Mucosa of descending colon (tissue), 3 donors: ENCODE measurements at regions of chr5 and their contacts with region 1.

Region 1: GRCh38 chr5:134527146-134527960 is 1.9 kb downstream of the JADE2 start:
- DNase-seq: peak; percentile 74 to 90 (median 84)
- ATAC-seq: peak; percentile 65
- H3K4me3 ChIP-seq: peak overlapping the region; percentile 94
- H3K4me1 ChIP-seq: peaks cover 22% of the 10 kb centered on the region
- CTCF ChIP-seq: peak; percentile 72

Region 2: DNA sequence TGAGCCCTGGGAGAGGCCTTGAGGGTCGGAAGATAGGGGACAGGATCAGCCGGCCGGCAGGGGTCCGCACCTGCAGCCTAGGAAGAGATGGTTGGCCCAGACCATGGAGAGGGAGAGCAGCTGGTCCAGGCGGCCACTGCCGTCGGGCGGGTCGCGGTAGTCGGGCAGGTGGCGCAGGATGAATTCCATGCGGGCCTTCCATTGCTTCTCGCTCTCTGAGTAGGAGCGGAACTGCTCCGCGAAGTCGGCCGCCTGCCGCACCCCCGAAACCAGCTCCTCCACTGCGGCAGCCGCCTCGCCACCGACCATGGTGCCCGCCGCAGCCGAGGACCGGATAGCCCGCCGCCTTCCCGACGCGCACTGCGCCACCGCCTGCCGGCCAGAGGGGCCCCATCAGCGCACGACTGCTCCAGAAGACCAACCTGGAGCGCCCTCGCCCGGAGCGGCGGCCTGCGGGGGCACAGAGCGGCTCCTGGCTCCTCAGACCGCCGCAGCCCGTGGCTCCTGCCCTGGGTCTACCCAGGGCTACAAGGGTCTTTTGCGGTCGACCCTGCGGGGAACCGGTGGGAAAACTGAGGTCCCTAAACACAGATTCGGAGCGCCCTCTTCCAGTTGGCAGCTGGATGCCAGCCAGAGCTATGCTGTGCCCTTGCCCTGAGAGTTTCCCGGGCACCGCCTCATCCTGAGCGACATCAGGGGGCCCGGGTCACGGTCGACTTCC is 115.6 kb before region 1 on chr5 and contains the start of gene CDKN2AIPNL:
- intact Hi-C with region 1: loop called in 1 of 2 experiments (anchors 10 kb)
- DNase-seq: peak; percentile 94 to 95 (median 95)
- ATAC-seq: peak; percentile 97
- H3K4me3 ChIP-seq: peak within 1 kb of the TSS; percentile 65
- H3K4me1 ChIP-seq: peaks cover 28% of the 10 kb centered on the region
- CTCF ChIP-seq: peak; percentile 70
- total RNA-seq, gene CDKN2AIPNL: 16.0 to 24.4 (median 17.1) TPM

Region 3: DNA sequence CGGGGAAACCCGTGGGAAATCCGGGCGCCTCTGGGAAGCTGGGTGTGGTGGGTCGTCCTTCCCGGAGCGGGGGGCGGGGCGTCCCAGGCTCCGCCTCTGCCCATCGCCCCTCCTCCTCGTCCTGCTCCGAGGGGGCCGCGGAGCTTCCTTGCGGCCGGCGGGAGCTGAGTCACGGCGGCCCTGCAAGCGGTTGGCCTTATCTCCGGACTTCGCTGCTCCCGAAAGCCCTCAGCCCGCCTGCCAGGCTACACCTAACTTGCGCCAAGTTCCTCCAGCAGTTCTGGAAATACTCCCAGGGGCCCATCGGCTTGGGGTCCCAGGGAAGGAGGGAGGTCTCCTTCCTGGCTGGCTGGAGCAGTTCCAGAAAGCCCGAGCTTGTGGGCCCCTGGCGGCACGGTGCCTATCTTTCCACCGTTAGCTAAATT is 61.5 kb before region 1 on chr5:
- intact Hi-C with region 1: loop called in 1 of 2 experiments (anchors 2 kb)
- DNase-seq: peak; percentile 93 to 95 (median 94)
- ATAC-seq: peak; percentile 89
- H3K4me3 ChIP-seq: peak overlapping the region; percentile 1
- H3K4me1 ChIP-seq: peaks cover 18% of the 10 kb centered on the region
- CTCF ChIP-seq: no peak